WTC11 (cell line): ENCODE measurements at regions of chr19 and their contacts with region 1.

Region 1: DNA sequence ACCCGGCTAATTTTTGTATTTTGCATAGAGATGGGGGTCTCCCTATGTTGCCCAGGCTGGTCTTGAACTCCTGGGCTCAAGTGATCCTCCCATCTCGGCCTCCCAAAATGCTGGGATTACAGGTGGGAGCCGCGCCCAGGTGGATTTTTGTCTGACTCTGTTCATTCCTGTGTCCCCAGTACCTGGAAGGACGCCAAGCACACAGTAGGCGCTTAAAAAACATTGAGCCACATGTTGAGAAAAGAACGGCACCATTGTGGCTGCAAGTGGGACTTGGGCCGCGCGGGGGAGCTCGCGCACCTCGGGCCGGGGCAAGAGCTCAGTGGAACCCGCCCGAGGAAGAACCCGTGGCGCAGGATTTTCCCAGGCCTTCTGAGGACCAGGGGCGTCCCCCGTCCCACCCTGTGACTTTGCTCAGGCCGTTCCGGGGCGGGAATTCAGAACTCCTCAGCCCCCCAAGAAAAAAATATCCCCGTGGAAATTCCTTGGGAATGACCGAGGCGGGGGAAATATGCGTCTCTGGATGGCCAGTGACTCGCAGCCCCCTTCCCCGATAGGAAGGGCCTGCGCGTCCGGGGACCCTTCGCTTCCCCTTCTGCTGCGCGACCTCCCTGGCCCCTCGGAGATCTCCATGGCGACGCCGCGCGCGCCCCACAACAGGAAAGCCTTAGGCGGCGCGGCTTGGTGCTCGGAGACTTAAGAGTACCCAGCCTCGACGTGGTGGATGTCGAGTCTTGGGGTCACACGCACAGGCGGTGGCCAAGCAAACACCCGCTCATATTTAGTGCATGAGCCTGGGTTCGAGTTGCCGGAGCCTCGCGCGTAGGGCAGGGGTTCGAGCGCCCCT is 1.4 kb upstream of the ICAM1 start:
- DNase-seq: peak; percentile 93
- ATAC-seq: peak; percentile 69
- H3K4me3 Mint-ChIP-seq: peak overlapping the region; percentile 68
- H3K27ac Mint-ChIP-seq: no peak overlapping the region
- H3K4me1 Mint-ChIP-seq: 0 out of 2 replicates have a peak, but pooled peaks cover 4% of the 10 kb centered on the region
- H3K27me3 Mint-ChIP-seq: peaks cover 46% of the 10 kb centered on the region
- CTCF ChIP-seq: peak; percentile 84

Region 2: DNA sequence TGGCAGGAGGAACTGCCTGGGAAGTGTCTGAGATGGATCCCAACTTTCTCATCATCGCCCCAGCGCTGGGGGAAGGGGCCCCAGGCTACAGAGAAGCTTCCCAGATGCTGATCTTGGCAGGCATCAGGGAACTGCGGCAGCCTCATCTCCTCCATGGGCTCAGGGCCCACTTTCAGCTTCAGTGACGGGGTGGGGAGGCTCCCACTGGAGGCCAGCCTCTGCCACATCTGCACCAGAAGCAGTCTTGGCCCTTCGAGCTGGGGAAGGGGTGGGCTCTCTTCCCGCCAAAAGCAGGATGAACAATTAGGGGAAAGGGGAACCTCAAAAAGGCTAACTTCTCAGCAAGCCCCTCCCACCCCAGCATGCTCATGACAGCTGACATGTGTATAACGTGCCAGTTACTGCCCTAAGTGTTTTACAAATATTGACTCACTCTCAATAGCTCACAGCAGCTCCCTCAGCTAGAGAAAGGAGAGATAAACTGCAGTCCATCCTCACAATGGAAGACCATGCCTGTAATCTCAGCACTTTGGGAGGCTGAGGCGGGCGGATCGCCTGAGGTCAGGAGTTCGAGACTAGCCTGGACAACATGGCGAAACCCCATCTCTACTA is 31.3 kb before region 1 on chr19:
- CTCF ChIA-PET with region 1: no interaction called
- POLR2A ChIA-PET with region 1: no interaction called
- DNase-seq: no peak
- ATAC-seq: no peak
- H3K4me3 Mint-ChIP-seq: no peak overlapping the region
- H3K27ac Mint-ChIP-seq: no peak overlapping the region
- H3K4me1 Mint-ChIP-seq: peaks cover 6% of the 10 kb centered on the region
- H3K27me3 Mint-ChIP-seq: no peaks in the 10 kb centered on the region
- CTCF ChIP-seq: no peak

Region 3: DNA sequence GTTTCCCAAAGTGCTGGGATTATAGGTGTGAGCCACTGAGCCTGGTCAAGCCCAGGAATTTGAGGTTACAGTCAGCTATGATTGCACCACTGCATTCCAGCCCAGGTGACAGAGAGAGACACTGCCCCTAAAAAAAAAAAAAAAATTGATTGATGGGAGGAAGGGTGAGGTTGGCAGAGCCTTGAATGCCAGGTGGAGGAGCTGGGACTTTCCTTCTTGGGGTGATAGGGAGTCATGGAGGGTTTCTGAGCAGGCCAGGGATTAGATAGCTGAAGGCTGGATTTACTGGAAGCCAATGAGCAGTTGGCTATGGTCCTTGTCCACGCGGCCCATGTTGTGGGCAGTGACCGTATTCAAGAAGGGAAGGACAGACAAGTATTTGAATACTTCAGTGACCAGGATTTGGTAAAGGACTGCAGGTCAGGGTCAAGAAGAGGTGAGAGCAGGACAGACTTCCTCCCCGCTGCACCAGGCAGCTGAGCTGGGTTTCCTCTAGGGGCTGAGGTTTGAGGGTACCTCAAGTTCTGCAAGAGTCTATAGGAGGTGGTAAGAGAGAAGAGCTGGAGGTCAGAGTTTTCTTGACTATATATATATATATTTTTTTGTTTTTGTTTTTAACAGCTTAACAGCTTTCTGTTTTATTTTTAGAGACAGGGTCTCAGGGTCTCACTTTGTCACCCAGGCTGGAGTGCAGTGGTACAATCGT is 10.3 kb after region 1 on chr19:
- CTCF ChIA-PET with region 1: interaction called, 29 read pairs
- POLR2A ChIA-PET with region 1: no interaction called
- DNase-seq: no peak
- ATAC-seq: no peak
- H3K4me3 Mint-ChIP-seq: no peak overlapping the region
- H3K27ac Mint-ChIP-seq: 0 out of 2 replicates have a peak overlapping the region, but pooled peaks have one; percentile 2
- H3K4me1 Mint-ChIP-seq: no peaks in the 10 kb centered on the region
- H3K27me3 Mint-ChIP-seq: peaks cover 4% of the 10 kb centered on the region
- CTCF ChIP-seq: no peak

Region 4: DNA sequence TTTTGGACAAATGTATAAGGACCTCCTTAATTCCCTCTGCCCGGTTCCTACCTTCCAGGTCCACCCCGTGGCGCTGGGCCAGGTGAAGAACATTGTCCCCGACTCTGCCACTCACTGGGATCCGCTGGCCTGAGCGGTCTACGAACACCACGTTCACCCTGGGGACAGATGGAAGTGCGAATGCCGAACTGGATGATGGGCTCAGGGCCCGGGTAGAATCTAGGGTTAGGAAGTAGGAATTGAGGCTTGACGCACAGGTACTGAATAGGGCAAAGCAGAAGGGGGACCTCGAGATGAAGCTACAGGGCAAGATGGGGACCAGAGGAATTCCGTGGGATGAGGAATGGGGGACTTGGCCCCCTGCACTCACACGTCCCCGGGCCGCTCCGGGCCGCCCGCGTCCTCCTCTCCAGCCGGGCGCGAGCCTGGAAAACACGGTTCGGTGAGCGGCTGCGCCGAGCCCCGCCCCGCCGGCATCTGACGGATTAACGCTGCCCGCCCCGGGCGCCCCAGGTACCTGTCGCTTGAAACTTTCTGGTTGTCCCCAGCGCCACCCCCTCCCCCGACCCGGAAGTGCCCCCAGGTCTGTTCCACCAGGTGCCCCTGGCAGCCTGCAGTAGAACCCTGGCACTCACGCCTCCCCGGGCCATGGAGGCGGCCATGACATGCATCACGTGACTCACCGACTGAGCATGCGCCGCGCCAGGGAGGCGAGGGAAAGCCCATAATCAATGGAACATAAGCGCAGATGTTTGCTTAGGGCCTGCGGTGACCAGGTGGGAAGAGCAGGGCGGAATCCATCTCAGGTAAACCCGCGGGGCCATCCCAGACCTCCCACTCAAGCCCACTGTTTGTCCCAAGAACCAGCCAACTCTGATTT is 46.0 kb after region 1 on chr19 and contains the start of gene FDX2:
- CTCF ChIA-PET with region 1: interaction called, 11 read pairs
- POLR2A ChIA-PET with region 1: no interaction called
- DNase-seq: peak; percentile 92
- ATAC-seq: peak; percentile 84
- H3K4me3 Mint-ChIP-seq: peak within 1 kb of the TSS; percentile 92
- H3K27ac Mint-ChIP-seq: peak within 1 kb of the TSS; percentile 95
- H3K4me1 Mint-ChIP-seq: peaks cover 13% of the 10 kb centered on the region
- H3K27me3 Mint-ChIP-seq: no peaks in the 10 kb centered on the region
- CTCF ChIP-seq: no peak
- total RNA-seq, gene FDX2: 26.2 to 27.0 TPM (median 26.6 TPM) in 3 replicates

Region 5: DNA sequence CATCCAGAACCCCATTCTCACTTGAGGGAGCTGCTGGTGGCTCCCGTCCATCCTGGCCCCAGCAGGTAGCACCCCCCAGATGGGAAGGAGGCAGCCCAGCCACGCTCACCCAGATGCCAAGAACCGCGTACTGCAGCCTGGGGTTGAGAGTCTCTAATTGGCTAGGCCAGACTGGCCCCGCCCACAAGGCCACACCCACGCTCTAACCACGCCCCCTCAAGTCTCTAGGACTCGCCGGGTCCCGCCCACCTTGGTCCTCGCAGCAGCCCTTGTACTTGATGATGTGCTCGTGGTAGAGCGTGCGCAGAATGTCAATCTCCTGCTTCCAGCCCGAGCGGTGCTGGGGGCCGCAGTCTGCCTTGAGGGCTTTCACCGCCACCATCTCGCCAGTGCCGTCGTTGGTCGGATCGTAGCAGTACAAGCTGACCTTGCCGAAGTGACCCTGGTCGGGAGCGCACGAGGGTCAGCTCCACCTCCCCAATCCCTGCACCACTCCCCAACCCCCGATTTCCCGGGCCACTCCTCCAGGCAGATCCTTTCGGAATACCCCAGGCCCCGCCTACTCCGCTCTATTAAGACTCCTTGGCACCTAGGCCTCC is 84.3 kb after region 1 on chr19:
- CTCF ChIA-PET with region 1: interaction called, 10 read pairs
- POLR2A ChIA-PET with region 1: interaction called, 4 read pairs
- DNase-seq: peak; percentile 100
- ATAC-seq: peak; percentile 69
- H3K4me3 Mint-ChIP-seq: peak overlapping the region; percentile 84
- H3K27ac Mint-ChIP-seq: peak overlapping the region; percentile 94
- H3K4me1 Mint-ChIP-seq: peaks cover 14% of the 10 kb centered on the region
- H3K27me3 Mint-ChIP-seq: no peaks in the 10 kb centered on the region
- CTCF ChIP-seq: no peak

Region 6: GRCh38 chr19:10403137-10404021 is 133.8 kb after region 1 on chr19 and contains the start of gene CDC37:
- CTCF ChIA-PET with region 1: interaction called, 19 read pairs
- POLR2A ChIA-PET with region 1: no interaction called
- DNase-seq: peak; percentile 98
- ATAC-seq: peak; percentile 79
- H3K4me3 Mint-ChIP-seq: peak within 1 kb of the TSS; percentile 96
- H3K27ac Mint-ChIP-seq: peak within 1 kb of the TSS; percentile 89
- H3K4me1 Mint-ChIP-seq: peaks cover 19% of the 10 kb centered on the region
- H3K27me3 Mint-ChIP-seq: peaks cover 40% of the 10 kb centered on the region
- CTCF ChIP-seq: no peak
- total RNA-seq, gene CDC37: 163 to 204 TPM (median 164 TPM) in 3 replicates